ENCODE measurements at regions of chr9 and their contacts with region 1.

Region 1: DNA sequence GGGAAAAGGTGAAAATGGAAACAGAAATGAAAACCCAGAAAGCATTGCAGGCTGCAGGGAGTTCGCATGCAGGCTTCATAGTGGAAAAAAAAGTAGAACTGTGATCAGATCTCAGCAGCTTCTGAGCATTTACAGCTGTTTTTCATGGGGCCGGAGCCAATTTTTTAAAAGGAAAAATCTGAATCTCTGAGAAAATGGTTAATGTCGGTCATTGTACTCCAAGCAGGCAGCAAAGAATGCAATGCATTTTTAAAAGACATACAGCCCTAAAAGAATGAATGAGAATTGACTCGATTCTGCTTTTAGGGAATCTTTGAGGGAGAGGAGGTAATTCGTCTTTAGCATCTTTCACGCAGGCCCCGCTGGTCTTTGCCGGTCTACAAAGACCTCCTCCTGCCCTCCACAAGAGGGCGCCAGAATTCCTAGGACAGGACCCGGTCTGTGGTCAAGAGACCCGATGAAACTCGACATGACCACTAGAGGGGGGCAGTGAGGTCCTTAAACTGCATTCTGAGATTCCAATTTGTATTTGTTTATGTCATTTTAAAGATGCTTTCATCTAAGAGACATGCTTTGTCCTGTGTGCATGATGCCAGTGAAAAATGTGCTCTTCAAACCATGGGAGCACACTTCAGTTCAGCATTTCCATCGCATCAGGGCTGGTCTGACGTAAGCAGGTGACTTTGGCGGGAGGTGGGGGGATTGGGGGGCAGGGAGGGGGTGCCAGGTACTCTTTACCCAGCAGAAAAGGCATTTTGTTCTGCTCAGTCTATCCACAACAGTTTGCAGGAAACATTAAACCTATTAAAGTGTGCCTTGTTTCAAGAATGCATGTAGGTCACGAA is 43.7 kb upstream of the TMEM252 start:
- DNase-seq: peak; percentile 86
- H3K4me3 Mint-ChIP-seq: no peak overlapping the region
- H3K27ac Mint-ChIP-seq: no peak overlapping the region
- H3K4me1 Mint-ChIP-seq: no peaks in the 10 kb centered on the region
- H3K27me3 Mint-ChIP-seq: peaks cover 43% of the 10 kb centered on the region
- CTCF ChIP-seq: peak; percentile 97

Region 2: GRCh38 chr9:68567565-68567964 is 16.8 kb before region 1 on chr9:
- CTCF ChIA-PET with region 1: interaction called, 20 read pairs
- POLR2A ChIA-PET with region 1: no interaction called
- intact Hi-C with region 1: no loop called
- DNase-seq: no peak
- H3K4me3 Mint-ChIP-seq: no peak overlapping the region
- H3K27ac Mint-ChIP-seq: no peak overlapping the region
- H3K4me1 Mint-ChIP-seq: no peaks in the 10 kb centered on the region
- H3K27me3 Mint-ChIP-seq: peaks cover 30% of the 10 kb centered on the region
- CTCF ChIP-seq: no peak

Region 3: GRCh38 chr9:68779558-68780384 is 195.4 kb after region 1 on chr9:
- CTCF ChIA-PET with region 1: interaction called, 3 read pairs
- POLR2A ChIA-PET with region 1: no interaction called
- intact Hi-C with region 1: loop called (anchors 5 kb)
- DNase-seq: peak; percentile 92
- H3K4me3 Mint-ChIP-seq: no peak overlapping the region
- H3K27ac Mint-ChIP-seq: no peak overlapping the region
- H3K4me1 Mint-ChIP-seq: peaks cover 6% of the 10 kb centered on the region
- H3K27me3 Mint-ChIP-seq: peaks cover 9% of the 10 kb centered on the region
- CTCF ChIP-seq: no peak

Region 4: DNA sequence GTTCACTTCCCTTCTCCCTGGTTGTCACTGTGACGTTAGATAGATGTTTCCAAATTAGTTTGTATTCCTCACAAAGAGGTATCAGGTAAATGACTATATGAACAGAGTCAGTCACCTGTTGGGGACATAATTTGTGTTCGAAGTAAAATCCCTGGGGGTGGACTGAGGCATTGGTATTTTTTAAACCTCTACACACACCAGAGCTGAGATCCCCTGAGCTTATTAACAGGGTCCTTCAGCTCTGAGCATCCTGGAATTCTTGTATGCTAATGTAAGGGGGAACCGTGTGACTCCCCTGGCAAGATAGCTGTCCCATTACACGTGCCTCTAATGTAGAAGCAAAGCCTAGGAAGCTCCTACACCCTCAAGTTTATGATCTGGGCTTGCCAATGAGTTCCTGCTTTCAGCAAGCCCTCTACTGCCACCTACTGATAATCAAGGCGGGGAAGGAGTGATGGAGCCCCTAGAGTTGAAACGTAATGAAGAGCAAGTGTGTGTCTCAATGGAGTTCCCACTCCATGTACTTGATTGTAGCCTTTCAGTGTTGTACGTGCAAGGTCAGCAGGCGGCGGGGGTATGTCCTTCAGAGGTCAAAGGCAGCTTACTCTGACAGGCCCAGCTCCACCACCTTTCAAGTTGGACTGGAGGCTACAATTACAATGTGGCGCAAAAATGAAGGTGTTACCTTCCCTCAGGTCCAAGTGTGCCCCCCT is 415.1 kb after region 1 on chr9:
- CTCF ChIA-PET with region 1: interaction called, 66 read pairs
- POLR2A ChIA-PET with region 1: no interaction called
- intact Hi-C with region 1: loop called (anchors 1 kb)
- DNase-seq: peak; percentile 77
- H3K4me3 Mint-ChIP-seq: no peak overlapping the region
- H3K27ac Mint-ChIP-seq: peak overlapping the region; percentile 84
- H3K4me1 Mint-ChIP-seq: peaks cover 1% of the 10 kb centered on the region
- H3K27me3 Mint-ChIP-seq: peaks cover 80% of the 10 kb centered on the region
- CTCF ChIP-seq: peak; percentile 61

Region 5: GRCh38 chr9:69027355-69028096 is 443.1 kb after region 1 on chr9:
- CTCF ChIA-PET with region 1: interaction called, 6 read pairs
- POLR2A ChIA-PET with region 1: no interaction called
- intact Hi-C with region 1: loop called (anchors 1 kb)
- DNase-seq: peak; percentile 67
- H3K4me3 Mint-ChIP-seq: no peak overlapping the region
- H3K27ac Mint-ChIP-seq: no peak overlapping the region
- H3K4me1 Mint-ChIP-seq: peaks cover 6% of the 10 kb centered on the region
- H3K27me3 Mint-ChIP-seq: peaks cover 21% of the 10 kb centered on the region
- CTCF ChIP-seq: peak; percentile 69

Measured in MCF 10A (cell line).